Naive thymus-derived CD4-positive, alpha-beta T cell (primary cell): ENCODE measurements at regions of chr12 and their contacts with region 1.

Region 1: GRCh38 chr12:123388177-123388947 is 4.4 kb downstream of the KMT5A start:
- DNase-seq: peak; percentile 64 to 84 (median 75)
- ATAC-seq: peak; percentile 75
- H3K4me3 ChIP-seq: peak overlapping the region; percentile 88
- H3K4me3 Mint-ChIP-seq: peak overlapping the region; percentile 78 to 91 (median 84)
- H3K27ac ChIP-seq: peak overlapping the region; percentile 79
- H3K27ac Mint-ChIP-seq: peak overlapping the region in 8 of 9 donors; percentile 47 to 93 (median 86)
- H3K4me1 ChIP-seq: peaks cover 11 to 13% of the 10 kb centered on the region in 2 donors
- H3K4me1 Mint-ChIP-seq: peaks cover 10 to 49% (median 43%) of the 10 kb centered on the region in 7 donors
- H3K27me3 ChIP-seq: no peaks in the 10 kb centered on the region
- H3K27me3 Mint-ChIP-seq: no peaks in the 10 kb centered on the region

Region 2: DNA sequence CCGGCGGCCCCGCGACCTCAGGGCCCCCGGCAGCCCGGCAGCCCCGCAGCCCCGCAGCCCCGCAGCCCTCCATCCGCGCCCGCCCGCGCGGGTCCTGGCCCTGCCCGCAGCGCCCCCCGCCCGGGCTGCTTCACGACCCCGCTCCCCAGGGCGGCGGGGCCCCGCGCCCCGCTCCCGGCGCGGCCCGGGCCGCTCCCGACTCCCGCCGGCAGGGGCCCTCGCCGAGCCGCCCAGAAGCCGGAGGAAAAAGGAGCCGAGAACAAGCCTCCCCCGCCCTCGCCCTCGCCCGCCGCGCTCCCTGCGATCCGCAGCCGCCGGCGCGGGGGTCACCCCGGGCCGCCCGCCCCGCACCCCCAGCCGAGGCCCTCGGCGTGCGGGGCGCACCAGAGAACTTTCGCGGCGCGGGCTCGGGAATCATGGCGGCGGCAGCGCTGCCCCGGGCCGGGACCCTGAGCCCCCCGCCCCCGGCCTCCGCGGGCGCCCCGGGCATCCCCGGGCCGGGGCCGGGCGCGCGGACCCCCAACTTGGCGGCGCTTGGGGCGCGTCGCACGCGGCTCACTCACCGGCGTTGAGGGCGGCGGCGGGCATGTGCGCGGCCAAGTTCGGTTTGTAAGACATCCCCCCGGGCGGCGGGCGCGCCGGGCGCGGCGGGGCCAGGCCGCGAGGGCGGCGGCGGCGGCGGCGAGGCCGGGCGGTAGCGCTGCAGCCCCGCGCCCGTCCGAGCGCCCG is 117.2 kb before region 1 on chr12:
- CTCF ChIA-PET with region 1: no interaction called
- POLR2A ChIA-PET with region 1: no interaction called
- intact Hi-C with region 1: loop called in 1 of 2 experiments (anchors 2 kb)
- DNase-seq: peak; percentile 55 to 84 (median 68)
- ATAC-seq: peak; percentile 88
- H3K4me3 ChIP-seq: no peak overlapping the region
- H3K4me3 Mint-ChIP-seq: peak overlapping the region in 1 of 10 donors; percentile 87
- H3K27ac ChIP-seq: no peak overlapping the region
- H3K27ac Mint-ChIP-seq: no peak overlapping the region
- H3K4me1 ChIP-seq: peaks cover 12 to 18% of the 10 kb centered on the region in 2 donors
- H3K4me1 Mint-ChIP-seq: peaks cover 7 to 30% (median 20%) of the 10 kb centered on the region in 7 donors
- H3K27me3 ChIP-seq: no peaks in the 10 kb centered on the region
- H3K27me3 Mint-ChIP-seq: no peaks in the 10 kb centered on the region

Region 3: DNA sequence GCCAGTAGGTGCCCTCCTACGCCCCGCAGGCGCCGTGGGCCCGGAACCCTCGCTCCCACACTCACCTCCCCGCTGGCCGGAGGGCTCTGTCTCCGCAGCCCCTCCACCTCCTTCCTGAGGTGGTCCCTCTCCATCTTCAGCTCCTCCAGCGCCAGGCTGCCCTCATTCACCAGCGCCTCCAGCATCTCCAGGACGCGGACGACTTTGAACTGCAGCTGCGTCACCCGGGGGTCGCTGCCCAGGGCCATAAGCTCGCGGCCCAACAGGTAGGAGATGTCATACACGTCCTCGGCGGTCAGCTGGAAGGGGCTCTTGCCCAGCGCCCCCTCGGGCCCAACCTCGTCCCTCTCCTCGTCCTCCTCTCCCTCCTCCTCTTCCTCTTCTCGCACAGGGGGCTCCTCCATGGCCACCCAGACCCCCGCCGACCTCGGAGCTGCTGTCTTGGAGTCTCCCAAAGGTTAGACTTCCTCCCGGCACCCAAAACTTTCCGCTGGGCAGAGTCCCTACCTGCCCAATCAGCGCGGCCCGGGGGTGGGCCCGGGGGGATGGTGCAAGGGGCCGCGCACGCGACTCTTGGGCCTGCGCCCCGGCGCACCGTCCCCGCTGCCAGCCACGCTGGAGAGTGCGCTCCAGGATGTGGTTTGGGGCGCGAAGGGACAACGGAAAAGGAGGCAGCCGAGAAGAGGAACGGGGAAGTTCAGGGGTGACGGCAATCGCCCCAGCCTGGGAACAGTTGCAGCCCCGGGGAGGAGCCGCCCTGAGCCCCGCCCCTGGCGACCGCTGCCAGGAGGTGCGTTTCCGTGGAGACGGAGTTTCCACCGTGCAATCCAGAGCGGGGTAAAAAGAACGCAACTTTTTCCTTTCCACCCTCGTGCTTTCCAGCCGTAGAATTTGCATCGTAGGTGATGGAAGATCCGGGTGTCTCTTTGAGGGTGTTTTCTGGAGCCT is 47.9 kb after region 1 on chr12 and contains the start of gene RILPL2:
- CTCF ChIA-PET with region 1: interaction called, 3 read pairs
- POLR2A ChIA-PET with region 1: no interaction called
- intact Hi-C with region 1: loop called (anchors 1 to 5 kb)
- DNase-seq: peak; percentile 79 to 96 (median 88)
- ATAC-seq: peak; percentile 91
- H3K4me3 ChIP-seq: peak within 1 kb of the TSS; percentile 96
- H3K4me3 Mint-ChIP-seq: peak within 1 kb of the TSS; percentile 85 to 97 (median 93)
- H3K27ac ChIP-seq: peak within 1 kb of the TSS; percentile 88
- H3K27ac Mint-ChIP-seq: peak within 1 kb of the TSS; percentile 77 to 96 (median 88)
- H3K4me1 ChIP-seq: peaks cover 11 to 29% of the 10 kb centered on the region in 2 donors
- H3K4me1 Mint-ChIP-seq: peaks cover 24 to 47% (median 33%) of the 10 kb centered on the region in 7 donors
- H3K27me3 ChIP-seq: no peaks in the 10 kb centered on the region
- H3K27me3 Mint-ChIP-seq: no peaks in the 10 kb centered on the region
- total RNA-seq, gene RILPL2: 4.3 to 12.8 (median 5.6) TPM

Region 4: DNA sequence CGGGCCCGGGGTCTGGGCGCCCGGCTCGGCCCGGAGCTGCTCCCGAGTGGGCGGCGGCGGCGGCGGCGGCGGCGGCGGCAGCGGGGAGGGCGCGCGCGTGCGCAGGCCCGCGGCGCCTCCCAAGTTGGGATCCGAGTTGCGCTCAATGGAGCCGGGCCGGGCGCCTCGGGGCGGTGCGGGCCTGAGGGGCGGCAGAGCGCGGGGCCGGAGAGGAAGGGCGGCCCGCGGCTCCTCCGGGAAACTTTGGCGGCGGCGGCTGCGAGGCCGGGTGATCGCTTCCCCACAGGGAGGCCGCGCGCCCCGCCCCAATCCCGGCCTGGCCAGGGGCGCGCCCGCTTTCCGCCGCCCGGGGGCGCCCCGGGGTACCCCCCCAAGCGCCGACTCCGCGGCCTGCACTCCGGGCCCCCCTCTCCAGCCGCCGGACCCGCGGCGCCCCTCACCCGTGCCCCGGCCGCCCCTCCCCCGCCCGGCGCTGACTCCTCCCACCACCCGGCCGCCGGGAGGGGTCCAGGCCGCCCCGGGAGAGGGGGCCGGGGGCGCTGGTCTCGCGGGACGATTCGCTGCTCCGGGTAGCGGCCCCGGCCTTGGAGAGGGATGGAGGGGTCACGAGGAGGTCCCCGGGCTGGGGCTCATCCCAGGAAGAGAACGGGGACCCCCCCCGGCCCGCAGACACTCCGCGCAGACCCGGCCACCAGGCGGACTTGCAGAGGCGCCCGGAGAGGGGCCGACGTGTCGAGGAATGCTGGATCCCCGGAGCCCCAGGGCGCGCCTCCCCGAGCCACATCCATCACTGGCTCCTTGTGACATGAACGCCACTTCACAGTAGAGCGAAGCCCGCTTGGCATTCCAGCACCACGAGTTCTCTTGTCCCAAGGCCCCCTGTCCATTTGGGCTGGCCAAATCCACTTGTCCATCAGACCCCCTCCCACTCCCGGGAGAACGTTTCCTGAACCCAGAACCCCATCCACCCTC is 145.6 kb after region 1 on chr12 and contains the start of gene RILPL1:
- CTCF ChIA-PET with region 1: no interaction called
- POLR2A ChIA-PET with region 1: no interaction called
- intact Hi-C with region 1: loop called (anchors 1 to 5 kb)
- DNase-seq: peak; percentile 16 to 70 (median 47)
- ATAC-seq: peak; percentile 86
- H3K4me3 ChIP-seq: peak within 1 kb of the TSS; percentile 65
- H3K4me3 Mint-ChIP-seq: peak within 1 kb of the TSS; percentile 83 to 91 (median 88)
- H3K27ac ChIP-seq: peak within 1 kb of the TSS; percentile 61
- H3K27ac Mint-ChIP-seq: peak within 1 kb of the TSS; percentile 60 to 95 (median 79)
- H3K4me1 ChIP-seq: peaks cover 11 to 18% of the 10 kb centered on the region in 2 donors
- H3K4me1 Mint-ChIP-seq: peaks cover 11 to 25% (median 16%) of the 10 kb centered on the region in 7 donors
- H3K27me3 ChIP-seq: no peaks in the 10 kb centered on the region
- H3K27me3 Mint-ChIP-seq: peaks cover 0 to 22% (median 0%) of the 10 kb centered on the region in 5 donors
- total RNA-seq, gene RILPL1: 1.5 to 9.2 (median 3.9) TPM

Region 5: DNA sequence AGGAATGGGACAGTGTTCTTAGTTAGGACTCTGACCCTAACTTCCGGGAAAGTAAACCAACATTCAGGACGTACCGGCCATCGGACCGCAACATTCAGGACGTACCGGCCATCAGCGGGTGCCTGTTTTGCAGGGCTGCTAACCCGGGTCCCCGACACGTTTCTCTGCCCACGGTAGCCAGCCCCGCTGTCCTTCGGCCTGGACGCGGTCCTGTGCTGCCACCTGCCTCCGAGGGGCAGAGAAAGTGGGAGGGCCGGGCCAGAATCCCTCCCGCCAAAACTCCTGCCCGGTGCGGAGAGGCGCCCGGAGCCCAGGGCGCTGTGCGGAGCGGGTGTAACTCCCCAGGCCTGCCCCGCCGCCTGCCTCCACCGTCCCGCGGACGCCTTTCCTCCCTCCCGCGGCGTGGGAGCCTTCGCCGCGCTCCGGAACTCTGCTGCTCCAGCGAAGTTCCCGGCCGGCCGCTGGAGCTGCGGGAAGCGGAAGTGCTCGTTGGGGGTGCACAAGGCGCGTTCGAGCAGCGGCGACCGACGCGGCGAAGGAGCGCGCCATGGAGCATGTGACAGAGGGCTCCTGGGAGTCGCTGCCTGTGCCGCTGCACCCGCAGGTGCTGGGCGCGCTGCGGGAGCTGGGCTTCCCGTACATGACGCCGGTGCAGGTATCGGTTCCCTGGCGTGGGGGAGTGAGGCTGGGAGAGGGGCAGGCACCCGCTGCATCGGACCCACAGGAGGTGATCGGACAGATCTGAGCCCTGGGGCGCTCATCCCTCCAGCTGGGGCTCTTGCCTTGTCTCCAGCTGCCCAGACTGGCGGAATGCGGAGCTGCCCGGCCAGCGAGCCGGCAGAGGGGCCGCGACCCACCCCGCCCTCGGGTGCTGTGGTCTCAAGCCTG is 213.5 kb after region 1 on chr12 and contains the start of gene DDX55:
- CTCF ChIA-PET with region 1: no interaction called
- POLR2A ChIA-PET with region 1: no interaction called
- intact Hi-C with region 1: loop called in 1 of 2 experiments (anchors 5 kb)
- DNase-seq: peak; percentile 77 to 87 (median 86)
- ATAC-seq: peak; percentile 96
- H3K4me3 ChIP-seq: peak within 1 kb of the TSS; percentile 99
- H3K4me3 Mint-ChIP-seq: peak within 1 kb of the TSS; percentile 89 to 99 (median 97)
- H3K27ac ChIP-seq: peak within 1 kb of the TSS; percentile 84
- H3K27ac Mint-ChIP-seq: peak within 1 kb of the TSS; percentile 83 to 98 (median 93)
- H3K4me1 ChIP-seq: peaks cover 4 to 8% of the 10 kb centered on the region in 2 donors
- H3K4me1 Mint-ChIP-seq: peaks cover 11 to 47% (median 30%) of the 10 kb centered on the region in 7 donors
- H3K27me3 ChIP-seq: no peaks in the 10 kb centered on the region
- H3K27me3 Mint-ChIP-seq: no peaks in the 10 kb centered on the region
- total RNA-seq, gene DDX55: 26.0 to 54.0 (median 43.4) TPM